ENCODE measurements at regions of chr1 and their contacts with region 1.

Region 1: DNA sequence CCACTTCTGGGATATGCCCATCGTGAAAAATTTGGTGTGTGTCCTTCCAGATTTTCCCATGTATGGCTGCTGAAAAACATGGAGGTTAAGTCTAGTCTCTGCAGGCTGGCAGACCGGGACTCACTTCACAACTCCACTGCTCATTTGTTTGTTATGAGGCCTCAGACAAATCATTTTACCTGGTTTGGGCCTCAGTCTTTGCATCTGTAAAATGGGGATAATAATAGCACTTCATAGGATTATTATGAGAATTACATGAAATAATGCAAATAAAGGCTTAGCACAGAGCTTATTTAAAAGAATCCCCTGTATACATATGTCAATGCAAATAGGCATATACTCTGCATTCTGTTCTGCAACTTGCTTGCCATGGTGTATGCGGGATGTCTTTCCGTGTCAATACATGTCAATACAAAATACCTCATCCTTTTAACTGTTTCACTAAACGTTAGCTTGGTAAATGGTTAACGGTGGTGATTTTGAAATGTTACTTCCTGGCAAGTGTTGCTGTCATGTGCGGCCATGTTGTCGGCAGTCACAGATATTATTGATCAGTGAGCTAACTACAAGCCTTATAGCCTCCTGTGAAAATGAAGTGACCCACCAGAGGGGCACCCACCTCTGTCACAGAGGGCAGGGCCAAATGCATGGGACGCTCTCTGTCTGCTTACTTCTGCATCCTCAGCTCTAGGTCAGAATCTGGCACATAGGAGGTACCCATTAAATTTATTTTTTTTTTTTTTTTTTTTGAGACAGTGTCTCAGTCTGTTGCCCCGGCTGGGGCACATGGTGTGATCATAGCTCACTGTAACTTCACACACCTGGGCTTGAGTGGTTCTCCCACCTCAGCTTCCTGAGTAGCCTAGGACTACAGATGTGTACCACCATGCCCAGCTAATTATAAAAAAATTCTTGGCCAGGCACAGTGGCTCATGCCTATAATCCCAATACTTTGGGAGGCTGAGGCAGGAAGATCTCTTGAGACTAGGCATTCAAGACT is 4.3 kb downstream of the LCK start:
- DNase-seq: peak in 1 of 5 donors; percentile 56
- H3K4me3 ChIP-seq: peak overlapping the region; percentile 60
- H3K4me3 Mint-ChIP-seq: peak overlapping the region; percentile 88 to 100 (median 96)
- H3K27ac ChIP-seq: no peak overlapping the region
- H3K27ac Mint-ChIP-seq: peak overlapping the region; percentile 76 to 100 (median 92)
- H3K4me1 ChIP-seq: peaks cover 47% of the 10 kb centered on the region
- H3K4me1 Mint-ChIP-seq: peaks cover 51 to 65% (median 56%) of the 10 kb centered on the region in 3 donors
- H3K27me3 ChIP-seq: no peaks in the 10 kb centered on the region
- H3K27me3 Mint-ChIP-seq: peaks cover 0 to 2% of the 10 kb centered on the region in 2 donors

Region 2: GRCh38 chr1:32200226-32201010 is 55.0 kb before region 1 on chr1 and contains the start of gene CCDC28B:
- CTCF ChIA-PET with region 1: no interaction called
- POLR2A ChIA-PET with region 1: no interaction called
- DNase-seq: peak; percentile 39 to 75 (median 56)
- H3K4me3 ChIP-seq: peak within 1 kb of the TSS; percentile 96
- H3K4me3 Mint-ChIP-seq: peak within 1 kb of the TSS; percentile 83 to 98 (median 92)
- H3K27ac ChIP-seq: peak within 1 kb of the TSS; percentile 81
- H3K27ac Mint-ChIP-seq: peak within 1 kb of the TSS; percentile 86 to 99 (median 96)
- H3K4me1 ChIP-seq: peaks cover 49% of the 10 kb centered on the region
- H3K4me1 Mint-ChIP-seq: peaks cover 48 to 79% (median 54%) of the 10 kb centered on the region in 3 donors
- H3K27me3 ChIP-seq: no peaks in the 10 kb centered on the region
- H3K27me3 Mint-ChIP-seq: peaks cover 0 to 2% of the 10 kb centered on the region in 2 donors
- total RNA-seq, gene CCDC28B: 20.6 to 21.0 TPM

Region 3: GRCh38 chr1:32266921-32267591 is 11.7 kb after region 1 on chr1:
- CTCF ChIA-PET with region 1: interaction called, 181 read pairs
- POLR2A ChIA-PET with region 1: interaction called, 21 read pairs
- DNase-seq: peak in 1 of 5 donors; percentile 51
- H3K4me3 ChIP-seq: peak overlapping the region; percentile 45
- H3K4me3 Mint-ChIP-seq: peak overlapping the region; percentile 31 to 81 (median 78)
- H3K27ac ChIP-seq: no peak overlapping the region
- H3K27ac Mint-ChIP-seq: peak overlapping the region; percentile 84 to 98 (median 96)
- H3K4me1 ChIP-seq: peaks cover 74% of the 10 kb centered on the region
- H3K4me1 Mint-ChIP-seq: peaks cover 53 to 68% (median 62%) of the 10 kb centered on the region in 3 donors
- H3K27me3 ChIP-seq: no peaks in the 10 kb centered on the region
- H3K27me3 Mint-ChIP-seq: no peaks in the 10 kb centered on the region